ENCODE measurements at regions of chr19 and their contacts with region 1.

Region 1: DNA sequence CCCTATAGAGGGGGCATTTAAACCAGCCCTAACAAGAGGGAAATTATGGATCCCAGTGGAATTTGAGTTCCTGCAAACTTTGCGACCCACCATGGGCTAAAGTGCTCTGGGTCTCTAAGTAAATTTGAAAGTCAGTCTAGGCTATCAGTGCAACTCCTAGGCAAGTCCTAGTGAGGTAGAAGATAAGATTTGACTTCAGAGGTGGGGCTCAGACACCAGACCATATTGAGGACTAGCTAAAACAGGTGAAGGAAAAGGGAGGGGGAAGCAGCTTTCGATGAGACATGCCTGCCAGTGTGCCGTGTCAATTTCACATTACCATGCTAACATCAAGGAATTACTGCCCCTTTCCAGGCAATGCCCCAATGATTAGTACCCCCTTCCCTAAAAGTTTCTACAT is 38.4 kb downstream of the CD320 start:
- DNase-seq: no peak
- H3K4me3 ChIP-seq: no peak overlapping the region
- H3K27ac ChIP-seq: no peak overlapping the region
- H3K4me1 ChIP-seq: peaks cover 27% of the 10 kb centered on the region
- CTCF ChIP-seq: no peak

Region 2: GRCh38 chr19:8224394-8225145 is 45.2 kb before region 1 on chr19:
- CTCF ChIA-PET with region 1: no interaction called
- POLR2A ChIA-PET with region 1: no interaction called
- intact Hi-C with region 1: no loop called
- DNase-seq: no peak
- H3K4me3 ChIP-seq: no peak overlapping the region
- H3K27ac ChIP-seq: no peak overlapping the region
- H3K4me1 ChIP-seq: no peaks in the 10 kb centered on the region
- CTCF ChIP-seq: no peak

Region 3: DNA sequence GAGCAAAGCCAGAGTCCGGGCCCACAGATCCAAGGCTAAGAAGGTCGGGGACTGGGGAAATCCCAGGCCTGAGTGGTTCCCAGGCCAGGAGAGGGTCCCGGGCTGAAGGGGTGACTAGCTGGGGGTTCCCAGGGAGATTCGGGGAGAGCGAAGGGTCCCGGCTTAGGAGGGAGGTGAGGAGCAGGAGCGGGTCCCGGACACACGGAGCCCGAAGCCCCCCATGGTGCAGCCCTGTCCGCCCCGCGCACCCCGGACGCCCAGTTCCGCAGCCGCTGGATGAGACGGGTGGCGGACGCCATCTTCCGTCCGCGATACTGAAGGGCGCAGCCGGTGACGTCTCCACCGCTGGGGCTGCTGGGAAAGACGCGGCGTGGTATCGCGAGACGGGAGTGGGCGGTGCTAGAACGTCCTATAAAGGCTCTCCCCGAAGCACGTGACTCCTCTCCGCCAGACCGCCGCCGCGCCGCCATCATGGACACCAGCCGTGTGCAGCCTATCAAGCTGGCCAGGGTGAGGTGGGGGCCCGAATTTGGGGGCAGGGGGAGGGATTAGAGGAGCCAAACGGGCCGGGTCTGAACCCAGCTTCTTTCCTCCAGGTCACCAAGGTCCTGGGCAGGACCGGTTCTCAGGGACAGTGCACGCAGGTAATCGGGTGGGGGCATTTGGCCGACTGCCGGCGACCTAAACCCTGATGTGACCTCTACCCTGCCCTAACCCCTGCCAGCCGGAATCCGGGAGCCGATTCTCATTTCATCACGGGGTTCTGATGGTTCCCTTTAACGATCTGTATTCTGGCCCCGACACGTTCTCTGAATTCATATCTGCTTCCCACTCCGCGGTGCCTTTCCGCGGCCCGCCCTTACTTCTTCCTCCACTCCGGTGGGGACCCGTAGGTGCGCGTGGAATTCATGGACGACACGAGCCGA is 51.6 kb after region 1 on chr19 and contains the starts of genes NDUFA7 and RPS28:
- CTCF ChIA-PET with region 1: no interaction called
- POLR2A ChIA-PET with region 1: no interaction called
- intact Hi-C with region 1: loop called (anchors 5 kb)
- DNase-seq: peak; percentile 98
- H3K4me3 ChIP-seq: peak within 1 kb of the TSS; percentile 100
- H3K27ac ChIP-seq: peak within 1 kb of the TSS; percentile 67
- H3K4me1 ChIP-seq: peaks cover 55% of the 10 kb centered on the region
- CTCF ChIP-seq: 0 out of 2 replicates have a peak, but pooled peaks have one; percentile 27
- total RNA-seq, gene NDUFA7: 59.2 and 93.0 TPM in 2 replicates
- total RNA-seq, gene RPS28: 1,636 and 2,574 TPM in 2 replicates

Measured in OCI-LY7 (cell line).